Sigmoid colon (tissue), 7 donors: ENCODE measurements at regions of chr11 and their contacts with region 1.

Region 1: DNA sequence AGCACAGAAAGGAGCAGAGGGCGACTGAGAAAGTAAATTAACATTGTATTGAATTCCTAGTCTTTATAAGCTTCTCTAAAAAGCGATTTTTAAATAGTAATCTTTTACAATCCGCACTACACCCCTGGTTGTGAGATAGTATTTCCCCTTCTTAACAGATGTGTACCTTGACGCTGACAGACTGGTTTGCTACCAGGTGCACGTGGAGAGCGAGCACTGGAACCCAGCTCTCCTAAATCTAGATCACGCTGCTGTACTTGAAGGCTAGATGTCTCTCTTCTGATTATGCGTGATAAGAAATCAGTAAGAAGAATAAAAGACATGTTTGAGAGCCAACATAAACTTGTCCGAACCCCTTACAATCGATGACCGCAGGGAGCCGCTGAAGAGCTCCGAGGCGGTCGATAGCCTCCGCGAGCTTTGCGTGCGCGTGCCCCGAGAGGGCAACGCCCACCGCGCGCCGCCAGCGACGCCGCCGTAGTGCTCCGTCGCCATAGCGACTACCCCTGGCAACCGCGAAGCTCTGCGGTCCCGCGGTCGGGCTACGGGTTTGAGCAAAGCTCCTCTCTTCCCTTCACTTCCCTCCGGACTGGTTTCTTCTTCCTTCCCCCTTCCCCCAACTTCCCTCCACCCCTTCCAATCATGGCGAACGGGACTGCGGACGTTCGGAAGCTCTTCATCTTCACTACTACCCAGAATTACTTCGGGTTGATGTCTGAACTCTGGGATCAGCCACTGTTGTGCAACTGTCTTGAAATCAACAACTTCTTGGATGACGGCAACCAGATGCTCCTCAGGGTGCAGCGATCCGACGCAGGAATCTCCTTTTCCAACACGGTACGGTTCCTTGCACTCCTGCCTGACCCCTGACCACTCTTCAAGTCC is at the start of gene DYNC2H1:
- DNase-seq: peak; percentile 91
- H3K4me3 ChIP-seq: peak within 1 kb of the TSS; percentile 50 to 67 (median 61)
- H3K27ac ChIP-seq: peak within 1 kb of the TSS; percentile 65 to 82 (median 74)
- H3K4me1 ChIP-seq: peaks cover 0 to 23% (median 13%) of the 10 kb centered on the region in 4 donors
- H3K27me3 ChIP-seq: no peaks in the 10 kb centered on the region
- CTCF ChIP-seq: peak in 2 of 4 experiments; percentile 33 to 39
- EP300 ChIP-seq: no peak
- POLR2A ChIP-seq: no peak
- total RNA-seq, gene DYNC2H1: 21.3 to 29.1 (median 25.3) TPM

Region 2: GRCh38 chr11:102456381-102456780 is 652.8 kb before region 1 on chr11:
- intact Hi-C with region 1: no loop called
- DNase-seq: no peak
- H3K4me3 ChIP-seq: no peak overlapping the region
- H3K27ac ChIP-seq: no peak overlapping the region
- H3K4me1 ChIP-seq: peaks cover 0 to 10% (median 7%) of the 10 kb centered on the region in 4 donors
- H3K27me3 ChIP-seq: no peaks in the 10 kb centered on the region
- CTCF ChIP-seq: no peak
- EP300 ChIP-seq: no peak
- POLR2A ChIP-seq: no peak

Region 3: DNA sequence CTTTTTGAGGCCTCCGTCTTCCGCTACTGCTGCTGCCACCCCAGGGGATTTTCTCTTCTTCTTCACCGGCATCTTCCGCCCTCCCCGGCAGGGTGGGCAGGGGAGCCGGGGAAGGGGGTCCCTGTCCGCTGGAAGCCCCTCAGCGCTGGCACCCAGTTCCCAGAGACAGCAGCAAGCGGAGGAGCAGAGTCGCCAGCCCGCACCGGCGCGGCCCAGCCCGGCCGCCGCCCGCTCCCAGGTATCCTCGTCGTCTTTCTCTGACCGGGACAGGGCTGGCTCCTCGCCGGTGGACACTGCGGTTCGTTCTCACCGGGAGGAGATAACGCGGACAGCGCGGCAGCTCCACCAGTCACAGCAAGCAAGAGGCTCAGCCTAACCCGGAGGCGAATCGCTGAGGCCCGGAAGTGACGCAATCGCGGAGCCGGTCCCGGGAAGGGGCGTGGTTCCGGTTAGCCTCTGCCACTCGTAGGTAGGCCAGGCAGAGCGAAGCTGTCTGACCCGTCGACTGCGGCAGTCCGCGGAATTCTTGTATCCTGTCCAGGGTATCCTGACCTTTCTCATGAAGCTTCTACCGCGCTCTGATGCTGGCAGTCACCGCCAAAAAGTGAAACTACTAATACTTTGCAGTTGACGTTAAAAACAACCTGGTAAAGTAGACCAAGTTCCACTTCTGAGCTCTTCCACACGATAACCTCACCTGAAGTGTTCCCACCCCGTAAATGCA is 17.2 kb before region 1 on chr11 and contains the start of gene DCUN1D5:
- intact Hi-C with region 1: loop called (anchors 2 kb)
- DNase-seq: peak; percentile 98
- H3K4me3 ChIP-seq: peak within 1 kb of the TSS; percentile 82 to 97 (median 94)
- H3K27ac ChIP-seq: peak within 1 kb of the TSS; percentile 85 to 91 (median 90)
- H3K4me1 ChIP-seq: peaks cover 0 to 28% (median 25%) of the 10 kb centered on the region in 4 donors
- H3K27me3 ChIP-seq: no peaks in the 10 kb centered on the region
- CTCF ChIP-seq: no peak
- EP300 ChIP-seq: no peak
- POLR2A ChIP-seq: peak; percentile 58 to 60
- total RNA-seq, gene DCUN1D5: 38.8 to 64.6 (median 51.3) TPM